Activated CD4-positive, alpha-beta T cell treated with anti-CD3 and anti-CD28 coated beads, Interleukin-2, amount 10 ng/mL, durations not matched to agents 7 days and 5 days (primary cell): ENCODE measurements at regions of chr7 and their contacts with region 1.

Region 1: GRCh38 chr7:5494683-5495561 is 71.3 kb upstream of the TNRC18 start:
- DNase-seq: peak; percentile 85
- H3K4me3 Mint-ChIP-seq: no peak overlapping the region
- H3K27ac Mint-ChIP-seq: no peak overlapping the region
- H3K4me1 Mint-ChIP-seq: peaks cover 36% of the 10 kb centered on the region
- H3K27me3 Mint-ChIP-seq: no peaks in the 10 kb centered on the region

Region 2: DNA sequence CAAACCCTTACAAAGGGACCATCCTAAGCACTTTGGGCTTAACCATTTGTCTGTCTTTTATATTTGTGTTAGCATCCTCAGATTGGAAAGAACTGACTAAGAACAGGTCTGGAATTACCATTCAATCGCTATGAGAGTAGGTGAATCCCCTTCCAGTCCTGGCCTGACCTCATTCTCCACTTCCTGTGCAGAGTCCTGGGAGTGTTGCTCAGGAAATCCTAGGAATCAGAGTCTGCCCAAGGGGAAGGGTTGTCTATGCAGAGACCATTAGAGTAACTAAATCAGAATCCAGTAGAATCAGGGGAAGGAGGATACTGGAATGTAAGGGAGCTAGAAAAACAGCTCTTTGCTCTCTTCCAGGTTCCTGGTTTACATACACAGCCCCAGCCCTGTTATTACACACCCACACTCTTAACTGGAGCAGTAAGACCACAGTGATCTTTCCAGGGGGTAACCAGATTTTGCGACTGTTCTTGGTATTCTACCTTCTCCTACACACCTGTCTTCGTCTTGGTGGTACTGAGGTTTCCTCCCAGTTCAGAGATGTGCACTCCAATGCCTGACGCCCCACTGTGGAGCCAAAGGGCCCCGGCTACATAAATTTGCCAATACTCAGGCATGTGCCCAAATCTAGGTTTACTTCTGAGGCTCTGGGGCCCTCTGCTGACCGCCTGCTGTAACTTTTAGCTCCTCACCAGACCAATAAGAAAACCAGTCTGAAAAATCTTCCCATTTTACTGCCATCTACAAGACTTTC is 182.8 kb after region 1 on chr7:
- CTCF ChIA-PET with region 1: interaction called, 10 read pairs
- POLR2A ChIA-PET with region 1: no interaction called
- DNase-seq: peak; percentile 51
- H3K4me3 Mint-ChIP-seq: no peak overlapping the region
- H3K27ac Mint-ChIP-seq: no peak overlapping the region
- H3K4me1 Mint-ChIP-seq: peaks cover 59% of the 10 kb centered on the region
- H3K27me3 Mint-ChIP-seq: no peaks in the 10 kb centered on the region

Region 3: DNA sequence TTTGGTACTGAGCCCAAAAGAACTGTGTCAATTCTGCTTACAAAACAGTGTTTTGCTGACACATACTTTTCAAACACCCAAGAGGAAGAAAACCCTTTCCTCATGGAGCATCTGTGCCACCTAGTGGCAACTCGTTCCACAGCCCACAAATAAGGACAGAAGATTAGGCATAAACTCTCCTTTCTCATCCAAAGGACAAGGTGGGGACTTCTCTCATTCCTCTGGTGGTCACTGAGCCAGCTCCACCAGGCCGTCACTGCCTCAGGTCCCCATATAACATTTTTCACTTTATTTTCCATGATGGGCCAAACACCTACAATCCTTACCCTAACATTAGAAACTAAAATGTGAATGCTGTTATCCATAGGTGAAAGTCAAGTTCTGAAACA is 209.6 kb after region 1 on chr7:
- CTCF ChIA-PET with region 1: interaction called, 16 read pairs
- POLR2A ChIA-PET with region 1: no interaction called
- DNase-seq: peak; percentile 83
- H3K4me3 Mint-ChIP-seq: no peak overlapping the region
- H3K27ac Mint-ChIP-seq: no peak overlapping the region
- H3K4me1 Mint-ChIP-seq: peaks cover 45% of the 10 kb centered on the region
- H3K27me3 Mint-ChIP-seq: no peaks in the 10 kb centered on the region